GM12878 (cell line): ENCODE measurements at regions of chr9 and their contacts with region 1.

Region 1: GRCh38 chr9:122810306-122810946 is 10.5 kb downstream of the OR1K1 start:
- DNase-seq: peak; percentile 43
- ATAC-seq: peak; percentile 96
- H3K4me3 ChIP-seq: no peak overlapping the region
- H3K27ac ChIP-seq: no peak overlapping the region
- H3K4me1 ChIP-seq: no peaks in the 10 kb centered on the region
- H3K27me3 ChIP-seq: no peaks in the 10 kb centered on the region
- CTCF ChIP-seq: peak; percentile 55 to 90 (median 83); a peak in 4 of 6 replicates
- EP300 ChIP-seq: no peak
- POLR2A ChIP-seq: no peak
- RAD21 ChIP-seq: peak; percentile 96

Region 2: DNA sequence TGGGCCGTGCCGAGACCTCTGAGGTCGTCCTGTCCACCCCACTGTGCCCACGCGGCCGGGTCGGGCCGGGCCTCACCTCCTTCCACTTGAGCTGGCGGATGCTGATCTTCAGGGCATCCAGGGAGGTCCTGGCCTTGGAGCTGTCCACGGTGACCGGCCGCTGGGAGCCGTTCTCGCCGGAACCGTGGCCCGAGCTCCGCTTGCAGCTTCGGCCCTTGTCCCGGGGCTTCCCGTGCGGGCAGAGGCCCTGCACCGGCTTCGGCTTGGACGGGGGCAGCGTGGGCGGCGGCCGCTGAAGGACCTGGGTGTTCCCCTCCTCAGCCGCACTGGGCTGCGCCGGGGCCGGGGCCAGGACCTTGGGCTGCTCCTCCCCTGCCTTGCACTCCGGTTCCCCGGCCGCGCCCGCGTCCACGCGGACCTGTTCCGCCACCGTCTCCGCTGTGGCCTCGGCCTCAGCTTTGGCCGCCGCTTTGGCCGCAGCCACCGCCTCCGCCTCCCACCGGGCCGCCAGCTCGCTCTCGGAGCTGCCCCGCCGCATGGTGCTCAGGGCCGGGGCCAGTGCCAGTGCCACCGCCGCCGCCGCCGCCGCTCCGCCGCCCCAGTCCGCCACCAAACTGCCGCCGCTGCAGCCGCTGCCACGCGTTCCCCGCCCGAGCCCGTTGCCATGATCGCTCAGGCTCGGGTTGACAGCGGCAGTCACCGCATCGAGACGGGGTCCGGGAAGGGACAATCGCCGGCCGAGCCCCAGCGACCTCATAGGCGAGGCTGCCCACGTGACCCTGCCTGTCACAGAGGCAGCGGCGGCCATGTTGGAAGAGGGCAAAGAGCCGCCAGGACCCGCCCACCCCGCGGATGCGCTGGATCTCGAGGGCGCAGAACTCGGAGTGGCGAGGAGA is 717.6 kb before region 1 on chr9 and contains the start of gene TTLL11:
- CTCF ChIA-PET with region 1: interaction called, 14 read pairs
- POLR2A ChIA-PET with region 1: no interaction called
- RAD21 ChIA-PET with region 1: no interaction called
- SMC1A ChIA-PET with region 1: interaction called, 14 read pairs
- in situ Hi-C with region 1: loop called (anchors 10 kb)
- intact Hi-C with region 1: loop called (anchors 2 kb)
- DNase-seq: peak; percentile 48
- ATAC-seq: peak; percentile 95
- H3K4me3 ChIP-seq: peak within 1 kb of the TSS; percentile 74
- H3K27ac ChIP-seq: no peak within 1 kb of the TSS
- H3K4me1 ChIP-seq: peaks cover 2% of the 10 kb centered on the region; the same call in 1 of the 2 replicates
- H3K27me3 ChIP-seq: no peaks in the 10 kb centered on the region; a peak in 1 of 4 replicates
- CTCF ChIP-seq: no peak
- EP300 ChIP-seq: no peak
- POLR2A ChIP-seq: peak; percentile 83
- RAD21 ChIP-seq: no peak
- polyA plus RNA-seq, gene TTLL11: 1.2 to 1.4 TPM

Region 3: DNA sequence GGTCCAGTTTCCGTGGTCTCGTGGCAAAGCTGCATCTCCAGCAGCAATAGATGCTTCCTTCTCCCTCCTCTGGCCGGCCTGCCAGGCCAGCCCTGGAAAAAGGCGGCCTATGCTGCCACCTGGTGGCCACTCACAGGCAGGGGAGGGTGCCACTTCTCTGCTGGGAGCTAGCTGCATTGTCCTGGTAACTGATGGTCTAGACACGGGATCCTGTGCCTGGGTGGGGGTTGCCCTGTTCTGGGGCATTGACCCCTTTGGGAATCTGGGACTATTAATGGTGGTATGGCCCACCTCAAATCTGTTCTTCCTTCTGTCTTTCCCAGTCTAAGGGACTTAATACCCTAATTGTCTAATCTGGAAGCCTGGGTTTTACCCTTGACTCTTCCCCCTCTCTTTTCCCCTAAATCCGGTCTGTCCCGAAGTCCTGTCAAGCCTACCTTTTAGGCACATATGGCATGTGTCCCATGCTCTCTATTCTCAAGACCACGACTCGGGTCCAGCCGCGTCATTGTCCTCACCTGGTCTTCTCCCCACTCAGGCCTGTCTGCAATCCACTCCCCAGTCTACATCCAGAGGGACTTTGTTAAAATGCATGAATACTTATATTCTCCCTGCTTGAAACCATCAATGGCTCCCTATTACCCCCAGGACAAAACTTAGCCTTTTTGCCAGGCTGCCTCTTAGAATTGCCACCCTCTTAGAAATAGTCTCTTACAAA is 459.6 kb before region 1 on chr9:
- CTCF ChIA-PET with region 1: interaction called, 8 read pairs
- POLR2A ChIA-PET with region 1: no interaction called
- RAD21 ChIA-PET with region 1: interaction called, 3 read pairs
- SMC1A ChIA-PET with region 1: no interaction called
- in situ Hi-C with region 1: no loop called
- intact Hi-C with region 1: loop called (anchors 1 kb)
- DNase-seq: no peak
- ATAC-seq: peak; percentile 98
- H3K4me3 ChIP-seq: no peak overlapping the region
- H3K27ac ChIP-seq: no peak overlapping the region
- H3K4me1 ChIP-seq: no peaks in the 10 kb centered on the region; the same call in 1 of the 2 replicates
- H3K27me3 ChIP-seq: peaks cover 2 to 8% of the 10 kb centered on the region in 2 experiments; a peak in 2 of 4 replicates
- CTCF ChIP-seq: peak; percentile 93 to 97 (median 93); a peak in 5 of 6 replicates
- EP300 ChIP-seq: no peak
- POLR2A ChIP-seq: no peak
- RAD21 ChIP-seq: peak; percentile 98

Region 4: DNA sequence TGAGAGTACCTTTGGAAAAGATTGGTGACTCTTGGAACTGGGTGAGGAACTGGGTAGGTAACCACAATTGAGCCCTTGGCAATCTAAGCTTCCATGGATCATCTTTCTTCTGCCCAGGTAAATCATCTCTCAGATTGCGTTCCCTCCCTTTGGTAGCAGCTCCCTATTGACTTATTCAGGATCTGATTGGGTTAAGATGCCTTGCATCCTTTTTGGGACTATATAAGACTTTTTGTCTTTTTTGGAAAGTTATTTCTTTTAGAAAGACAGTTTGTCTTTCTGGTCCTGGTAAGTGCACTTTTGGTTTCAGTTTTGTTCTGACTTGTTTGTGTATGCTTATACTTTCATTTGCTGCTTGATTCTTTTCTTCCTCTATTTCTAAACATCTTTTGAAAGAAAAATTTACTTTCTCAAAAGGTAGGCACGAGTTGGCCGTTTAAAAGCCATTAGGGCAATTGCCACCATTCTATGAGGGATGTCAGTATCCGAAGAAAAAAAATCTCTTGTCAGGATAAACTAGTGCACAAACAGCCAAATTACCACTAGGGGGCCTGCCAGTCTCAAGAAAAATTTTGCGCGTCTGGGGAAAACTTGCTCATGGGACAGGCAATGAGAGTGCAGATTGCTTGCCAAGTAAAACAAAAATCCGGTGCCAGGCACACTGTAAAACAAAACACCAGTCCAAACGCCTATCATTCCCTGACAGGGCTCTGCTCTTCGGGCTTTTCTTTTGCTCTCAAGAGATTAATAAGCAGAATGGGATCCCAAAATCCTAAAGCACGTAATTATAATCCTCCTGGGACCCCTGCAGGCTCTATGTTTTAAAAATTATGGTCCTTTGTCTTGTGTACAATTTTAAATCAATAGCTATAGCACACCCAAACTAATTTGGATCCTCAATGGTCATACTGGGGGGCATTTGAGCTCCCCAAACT is 345.5 kb before region 1 on chr9:
- CTCF ChIA-PET with region 1: interaction called, 81 read pairs
- POLR2A ChIA-PET with region 1: no interaction called
- RAD21 ChIA-PET with region 1: interaction called, 10 read pairs
- SMC1A ChIA-PET with region 1: interaction called, 63 read pairs
- in situ Hi-C with region 1: loop called (anchors 5 kb)
- intact Hi-C with region 1: loop called (anchors 1 kb)
- DNase-seq: peak; percentile 45
- ATAC-seq: peak; percentile 84
- H3K4me3 ChIP-seq: peak overlapping the region; percentile 54; the same call in 1 of the 2 replicates
- H3K27ac ChIP-seq: peak overlapping the region; percentile 4; the same call in 1 of the 2 replicates
- H3K4me1 ChIP-seq: no peaks in the 10 kb centered on the region
- H3K27me3 ChIP-seq: no peaks in the 10 kb centered on the region; a peak in 1 of 4 replicates
- CTCF ChIP-seq: peak; percentile 76 to 81 (median 79)
- EP300 ChIP-seq: no peak
- POLR2A ChIP-seq: no peak
- RAD21 ChIP-seq: peak; percentile 77

Region 5: GRCh38 chr9:122498883-122499288 is 311.5 kb before region 1 on chr9:
- CTCF ChIA-PET with region 1: interaction called, 28 read pairs
- POLR2A ChIA-PET with region 1: no interaction called
- RAD21 ChIA-PET with region 1: interaction called, 6 read pairs
- SMC1A ChIA-PET with region 1: interaction called, 5 read pairs
- in situ Hi-C with region 1: no loop called
- intact Hi-C with region 1: loop called (anchors 1 kb)
- DNase-seq: no peak
- ATAC-seq: peak; percentile 75
- H3K4me3 ChIP-seq: no peak overlapping the region
- H3K27ac ChIP-seq: no peak overlapping the region
- H3K4me1 ChIP-seq: no peaks in the 10 kb centered on the region
- H3K27me3 ChIP-seq: no peaks in the 10 kb centered on the region; a peak in 1 of 4 replicates
- CTCF ChIP-seq: peak; percentile 69 to 87 (median 87)
- EP300 ChIP-seq: no peak
- POLR2A ChIP-seq: no peak
- RAD21 ChIP-seq: peak; percentile 54